Naive thymus-derived CD4-positive, alpha-beta T cell (primary cell): ENCODE measurements at regions of chr10 and their contacts with region 1.

Region 1: DNA sequence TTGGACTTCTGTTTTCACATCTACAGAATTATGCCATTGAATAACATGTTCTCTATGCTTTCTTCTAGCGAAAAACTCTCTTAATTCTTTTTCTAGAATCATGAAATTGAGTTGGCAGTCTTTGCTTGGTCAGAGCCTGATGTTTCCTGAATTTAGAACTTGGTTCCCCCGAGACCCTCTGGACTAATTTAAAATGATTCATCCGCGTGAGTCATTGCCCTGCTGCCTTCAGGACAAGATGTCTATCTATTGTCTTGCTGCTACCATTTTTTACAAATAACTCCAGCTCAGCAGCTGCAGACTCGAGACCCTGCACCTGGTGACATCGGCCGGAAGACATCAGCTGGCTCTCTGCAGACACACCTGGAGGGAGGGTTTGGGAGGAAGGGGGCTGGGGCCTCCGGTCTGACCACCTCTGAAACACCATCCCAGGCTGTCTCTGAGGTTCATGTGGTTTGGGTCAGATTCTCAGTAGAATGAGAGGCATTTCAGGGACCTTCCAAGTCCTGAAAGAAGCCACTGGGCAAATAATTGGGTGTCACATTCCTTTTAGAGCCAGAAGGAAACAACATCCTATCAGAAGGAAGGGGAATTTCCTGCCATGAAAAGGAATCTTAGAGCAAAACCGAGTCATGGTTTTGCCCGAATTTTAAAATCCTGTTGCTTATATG is 20.9 kb upstream of the KLF6 start:
- DNase-seq: peak in 3 of 9 donors; percentile 13 to 53 (median 31)
- ATAC-seq: no peak
- H3K4me3 ChIP-seq: peak overlapping the region; percentile 38
- H3K4me3 Mint-ChIP-seq: peak overlapping the region; percentile 14 to 86 (median 70)
- H3K27ac ChIP-seq: peak overlapping the region; percentile 82
- H3K27ac Mint-ChIP-seq: peak overlapping the region in 3 of 9 donors; percentile 97 to 99 (median 99)
- H3K4me1 ChIP-seq: peaks cover 70 to 83% of the 10 kb centered on the region in 2 donors
- H3K4me1 Mint-ChIP-seq: peaks cover 43 to 81% (median 74%) of the 10 kb centered on the region in 7 donors
- H3K27me3 ChIP-seq: no peaks in the 10 kb centered on the region
- H3K27me3 Mint-ChIP-seq: no peaks in the 10 kb centered on the region

Region 2: GRCh38 chr10:3668276-3668965 is 137.5 kb before region 1 on chr10:
- CTCF ChIA-PET with region 1: no interaction called
- POLR2A ChIA-PET with region 1: no interaction called
- intact Hi-C with region 1: loop called in 1 of 2 experiments (anchors 1 kb)
- DNase-seq: peak; percentile 34 to 85 (median 77)
- ATAC-seq: peak; percentile 91
- H3K4me3 ChIP-seq: peak overlapping the region; percentile 63
- H3K4me3 Mint-ChIP-seq: peak overlapping the region; percentile 82 to 98 (median 88)
- H3K27ac ChIP-seq: peak overlapping the region; percentile 65
- H3K27ac Mint-ChIP-seq: peak overlapping the region; percentile 36 to 96 (median 93)
- H3K4me1 ChIP-seq: peaks cover 33% of the 10 kb centered on the region in 2 donors
- H3K4me1 Mint-ChIP-seq: peaks cover 27 to 51% (median 40%) of the 10 kb centered on the region in 7 donors
- H3K27me3 ChIP-seq: no peaks in the 10 kb centered on the region
- H3K27me3 Mint-ChIP-seq: no peaks in the 10 kb centered on the region

Region 3: GRCh38 chr10:3828404-3829155 is 22.7 kb after region 1 on chr10:
- CTCF ChIA-PET with region 1: interaction called, 4 read pairs
- POLR2A ChIA-PET with region 1: interaction called, 32 read pairs
- intact Hi-C with region 1: loop called (anchors 1 kb)
- DNase-seq: peak in 6 of 9 donors; percentile 40 to 66 (median 54)
- ATAC-seq: peak; percentile 63
- H3K4me3 ChIP-seq: peak overlapping the region; percentile 65
- H3K4me3 Mint-ChIP-seq: peak overlapping the region; percentile 73 to 88 (median 78)
- H3K27ac ChIP-seq: peak overlapping the region; percentile 73
- H3K27ac Mint-ChIP-seq: peak overlapping the region; percentile 80 to 92 (median 90)
- H3K4me1 ChIP-seq: peaks cover 15 to 17% of the 10 kb centered on the region in 2 donors
- H3K4me1 Mint-ChIP-seq: peaks cover 12 to 54% (median 22%) of the 10 kb centered on the region in 7 donors
- H3K27me3 ChIP-seq: no peaks in the 10 kb centered on the region
- H3K27me3 Mint-ChIP-seq: no peaks in the 10 kb centered on the region

Region 4: DNA sequence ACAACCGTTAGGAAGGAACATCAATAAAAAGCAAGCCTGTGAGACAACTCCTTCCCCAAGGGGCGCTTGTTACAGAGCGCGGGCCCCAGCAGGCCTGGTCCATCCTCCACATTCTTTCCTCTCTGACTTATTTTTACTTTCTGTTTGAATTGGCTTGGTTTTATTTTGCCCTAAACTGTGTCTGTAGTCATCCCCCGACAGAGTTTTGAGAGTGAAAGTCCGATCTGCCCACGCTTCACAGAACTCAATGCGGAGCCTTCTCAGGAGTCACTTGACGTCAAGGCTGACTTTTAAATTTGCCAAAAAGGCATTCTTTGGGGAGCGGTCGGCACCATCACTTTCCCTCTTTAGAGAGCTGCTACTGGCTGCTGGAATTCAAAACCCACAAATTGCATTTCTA is 129.2 kb after region 1 on chr10:
- CTCF ChIA-PET with region 1: no interaction called
- POLR2A ChIA-PET with region 1: no interaction called
- intact Hi-C with region 1: loop called in 1 of 2 experiments (anchors 1 kb)
- DNase-seq: peak in 6 of 9 donors; percentile 4 to 73 (median 22)
- ATAC-seq: peak; percentile 84
- H3K4me3 ChIP-seq: peak overlapping the region; percentile 32
- H3K4me3 Mint-ChIP-seq: peak overlapping the region; percentile 43 to 83 (median 78)
- H3K27ac ChIP-seq: peak overlapping the region; percentile 43
- H3K27ac Mint-ChIP-seq: peak overlapping the region; percentile 67 to 95 (median 86)
- H3K4me1 ChIP-seq: peaks cover 0 to 5% of the 10 kb centered on the region in 2 donors
- H3K4me1 Mint-ChIP-seq: peaks cover 11 to 61% (median 17%) of the 10 kb centered on the region in 7 donors
- H3K27me3 ChIP-seq: no peaks in the 10 kb centered on the region
- H3K27me3 Mint-ChIP-seq: no peaks in the 10 kb centered on the region

Region 5: DNA sequence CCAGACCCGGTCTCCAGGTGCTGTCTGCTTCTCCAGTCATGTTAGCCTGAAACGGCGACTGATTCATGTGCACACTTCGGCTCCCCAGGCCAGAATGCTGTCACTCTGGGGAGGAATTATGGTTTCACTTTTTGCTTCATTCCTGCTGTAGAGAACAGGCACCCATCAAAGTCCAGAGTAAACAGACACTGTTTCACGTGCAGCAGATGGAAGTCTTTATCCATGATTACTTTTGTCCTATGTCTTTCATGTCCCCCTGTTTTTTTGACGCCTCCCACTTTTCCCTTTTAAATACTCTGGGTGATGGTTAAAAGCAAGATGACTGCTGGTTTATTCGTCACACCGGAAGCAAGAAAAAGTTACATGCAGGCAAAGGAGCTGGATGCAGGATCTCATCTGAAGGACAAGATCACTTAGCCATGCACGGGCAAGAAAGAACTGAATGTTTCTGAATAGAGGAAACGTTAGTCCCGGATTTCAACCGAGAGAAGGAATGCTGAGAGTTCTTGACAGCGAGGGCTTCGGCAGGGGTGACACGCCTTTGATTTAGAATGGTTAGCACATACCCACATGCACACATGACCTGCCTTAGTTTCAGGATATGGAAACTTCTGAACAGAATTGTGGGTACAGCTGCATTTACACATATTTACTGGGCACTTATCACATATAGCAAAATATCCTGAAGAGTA is 229.1 kb after region 1 on chr10:
- CTCF ChIA-PET with region 1: no interaction called
- POLR2A ChIA-PET with region 1: interaction called, 5 read pairs
- intact Hi-C with region 1: loop called in 1 of 2 experiments (anchors 1 kb)
- DNase-seq: peak in 7 of 9 donors; percentile 6 to 41 (median 30)
- ATAC-seq: peak; percentile 78
- H3K4me3 ChIP-seq: peak overlapping the region; percentile 44
- H3K4me3 Mint-ChIP-seq: peak overlapping the region; percentile 73 to 91 (median 82)
- H3K27ac ChIP-seq: peak overlapping the region; percentile 22
- H3K27ac Mint-ChIP-seq: peak overlapping the region; percentile 67 to 91 (median 82)
- H3K4me1 ChIP-seq: peaks cover 4 to 11% of the 10 kb centered on the region in 2 donors
- H3K4me1 Mint-ChIP-seq: peaks cover 8 to 37% (median 17%) of the 10 kb centered on the region in 7 donors
- H3K27me3 ChIP-seq: no peaks in the 10 kb centered on the region
- H3K27me3 Mint-ChIP-seq: no peaks in the 10 kb centered on the region